Activated CD4-positive, alpha-beta T cell treated with anti-CD3 and anti-CD28 coated beads for 36 hours (primary cell): ENCODE measurements at regions of chr1 and their contacts with region 1.

Region 1: GRCh38 chr1:6554031-6554906 is at the start of gene NOL9:
- DNase-seq: peak; percentile 97
- ATAC-seq: peak; percentile 98
- H3K4me3 Mint-ChIP-seq: peak within 1 kb of the TSS; percentile 82
- H3K27ac Mint-ChIP-seq: peak within 1 kb of the TSS; percentile 55
- H3K4me1 Mint-ChIP-seq: peaks cover 19% of the 10 kb centered on the region
- H3K27me3 Mint-ChIP-seq: no peaks in the 10 kb centered on the region
- total RNA-seq, gene NOL9: 37.4 to 44.7 TPM

Region 2: GRCh38 chr1:6235296-6235677 is 319.0 kb before region 1 on chr1:
- CTCF ChIA-PET with region 1: no interaction called
- POLR2A ChIA-PET with region 1: no interaction called
- intact Hi-C with region 1: loop called in 1 of 2 experiments (anchors 1 kb)
- DNase-seq: no peak
- ATAC-seq: peak; percentile 7
- H3K4me3 Mint-ChIP-seq: peak overlapping the region; percentile 88
- H3K27ac Mint-ChIP-seq: peak overlapping the region; percentile 78
- H3K4me1 Mint-ChIP-seq: peaks cover 12% of the 10 kb centered on the region
- H3K27me3 Mint-ChIP-seq: peaks cover 11% of the 10 kb centered on the region

Region 3: DNA sequence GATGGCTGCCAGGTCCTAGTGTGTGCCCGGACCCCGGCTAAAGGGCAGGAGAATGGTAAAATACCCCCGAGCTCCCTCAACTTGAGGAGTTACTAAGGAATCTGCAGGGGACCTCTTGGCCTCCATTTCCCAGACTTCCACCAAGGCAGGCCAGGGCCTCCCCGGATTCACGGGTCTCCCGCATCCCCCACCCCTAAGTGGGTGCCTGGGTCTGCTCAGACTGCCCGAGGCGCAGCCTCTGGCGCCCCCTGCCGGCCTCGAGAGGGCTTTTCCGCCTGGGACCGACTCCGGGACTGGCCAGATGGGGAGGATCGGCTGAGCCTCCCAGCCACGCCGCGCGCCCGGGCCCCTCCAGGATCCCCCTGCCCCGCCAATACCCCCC is 64.5 kb before region 1 on chr1:
- CTCF ChIA-PET with region 1: interaction called, 4 read pairs
- POLR2A ChIA-PET with region 1: no interaction called
- intact Hi-C with region 1: loop called in 1 of 2 experiments (anchors 1 kb)
- DNase-seq: peak; percentile 88
- ATAC-seq: peak; percentile 71
- H3K4me3 Mint-ChIP-seq: peak overlapping the region; percentile 74
- H3K27ac Mint-ChIP-seq: peak overlapping the region; percentile 63
- H3K4me1 Mint-ChIP-seq: peaks cover 18% of the 10 kb centered on the region
- H3K27me3 Mint-ChIP-seq: peaks cover 9% of the 10 kb centered on the region

Region 4: GRCh38 chr1:6579374-6580118 is 25.3 kb after region 1 on chr1 and contains the start of gene ZBTB48:
- CTCF ChIA-PET with region 1: interaction called, 15 read pairs
- POLR2A ChIA-PET with region 1: interaction called, 4 read pairs
- intact Hi-C with region 1: loop called (anchors 1 kb)
- DNase-seq: peak; percentile 99
- ATAC-seq: peak; percentile 99
- H3K4me3 Mint-ChIP-seq: peak within 1 kb of the TSS; percentile 92
- H3K27ac Mint-ChIP-seq: peak within 1 kb of the TSS; percentile 89
- H3K4me1 Mint-ChIP-seq: peaks cover 30% of the 10 kb centered on the region
- H3K27me3 Mint-ChIP-seq: no peaks in the 10 kb centered on the region
- total RNA-seq, gene ZBTB48: 23.2 to 26.0 TPM

Region 5: DNA sequence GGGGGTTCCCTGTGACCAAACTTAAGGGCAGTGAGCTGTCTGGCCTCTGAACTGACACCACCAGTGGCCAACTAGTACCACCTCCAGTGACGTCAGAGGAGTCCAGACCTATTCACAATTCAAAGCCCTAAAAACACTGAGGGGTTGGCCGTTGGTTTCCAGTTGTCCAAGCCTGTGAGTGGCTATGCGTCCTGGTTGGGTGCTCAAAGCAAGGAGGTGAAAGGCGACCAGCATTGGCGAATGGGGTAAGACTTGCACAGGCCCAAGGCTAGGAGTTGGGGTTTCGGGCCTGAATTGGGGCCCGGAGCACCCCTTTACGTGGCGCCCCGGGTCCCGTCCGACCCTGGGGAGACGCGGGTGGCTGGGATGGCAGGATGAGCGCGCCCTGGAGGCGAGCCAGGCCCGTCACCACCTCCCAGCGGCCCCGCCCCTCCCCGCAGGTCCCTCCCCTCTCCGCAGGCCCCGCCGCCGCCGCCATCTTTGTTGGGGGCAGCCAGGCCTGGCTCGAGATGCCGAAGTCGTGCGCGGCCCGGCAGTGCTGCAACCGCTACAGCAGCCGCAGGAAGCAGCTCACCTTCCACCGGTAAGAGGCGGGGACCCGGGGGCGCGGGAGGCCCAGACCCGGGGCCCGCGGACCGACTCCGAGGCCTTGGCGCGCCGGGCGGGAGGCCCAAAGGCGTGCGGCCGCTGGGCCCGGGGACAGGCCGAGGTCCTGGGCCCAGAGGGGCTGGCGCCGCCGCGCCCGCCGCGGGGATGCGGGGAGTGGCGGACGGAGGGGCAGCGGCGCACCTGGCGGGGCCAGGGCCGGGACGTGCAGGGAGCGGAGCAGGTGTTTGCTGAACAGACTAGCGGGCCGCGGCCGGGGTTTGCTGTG is 70.7 kb after region 1 on chr1 and contains the start of gene THAP3:
- CTCF ChIA-PET with region 1: interaction called, 4 read pairs
- POLR2A ChIA-PET with region 1: interaction called, 3 read pairs
- intact Hi-C with region 1: loop called in 1 of 2 experiments (anchors 1 kb)
- DNase-seq: peak; percentile 96
- ATAC-seq: peak; percentile 98
- H3K4me3 Mint-ChIP-seq: peak within 1 kb of the TSS; percentile 85
- H3K27ac Mint-ChIP-seq: peak within 1 kb of the TSS; percentile 78
- H3K4me1 Mint-ChIP-seq: peaks cover 28% of the 10 kb centered on the region
- H3K27me3 Mint-ChIP-seq: no peaks in the 10 kb centered on the region
- total RNA-seq, gene THAP3: 19.4 to 22.1 TPM

Region 6: GRCh38 chr1:6701437-6702153 is 147.3 kb after region 1 on chr1 and contains the start of gene DNAJC11:
- CTCF ChIA-PET with region 1: no interaction called
- POLR2A ChIA-PET with region 1: no interaction called
- intact Hi-C with region 1: loop called in 1 of 2 experiments (anchors 1 kb)
- DNase-seq: peak; percentile 93
- ATAC-seq: peak; percentile 98
- H3K4me3 Mint-ChIP-seq: peak within 1 kb of the TSS; percentile 90
- H3K27ac Mint-ChIP-seq: peak within 1 kb of the TSS; percentile 92
- H3K4me1 Mint-ChIP-seq: peaks cover 28% of the 10 kb centered on the region
- H3K27me3 Mint-ChIP-seq: no peaks in the 10 kb centered on the region
- total RNA-seq, gene DNAJC11: 53.2 to 62.0 TPM